ENCODE measurements at regions of chr6 and their contacts with region 1.

Region 1: DNA sequence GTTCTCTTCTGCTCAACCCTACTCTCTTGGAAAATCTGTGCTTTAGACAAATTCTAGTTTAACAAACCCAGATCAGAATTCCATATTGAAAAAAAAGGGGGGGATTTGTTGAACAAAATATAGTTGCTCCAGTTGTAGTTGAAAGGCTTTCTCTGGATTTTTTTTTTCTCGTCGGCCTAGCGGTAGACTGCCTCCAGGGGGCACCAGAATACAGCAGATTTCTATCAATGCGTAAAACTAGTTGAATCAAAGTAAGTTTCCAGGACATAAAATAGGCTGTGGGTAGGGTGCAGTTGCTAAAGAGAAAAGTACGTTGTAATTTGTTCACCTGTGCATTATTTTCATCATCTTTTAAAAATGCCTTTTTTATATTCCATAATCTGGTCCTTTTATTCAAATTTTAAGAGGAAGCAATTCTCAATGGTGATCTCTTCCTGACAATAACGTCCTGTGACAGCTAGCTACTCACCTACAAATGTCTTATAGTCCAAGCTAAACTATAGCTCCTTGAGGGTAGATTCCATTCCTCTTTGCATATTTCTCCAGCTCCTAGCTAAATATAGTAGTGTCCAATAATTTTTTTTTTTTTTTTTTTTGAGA is 105.4 kb downstream of the PERP start:
- DNase-seq: peak; percentile 74
- ATAC-seq: peak; percentile 36
- H3K4me3 Mint-ChIP-seq: no peak overlapping the region
- H3K27ac Mint-ChIP-seq: no peak overlapping the region
- H3K4me1 Mint-ChIP-seq: peaks cover 14% of the 10 kb centered on the region
- H3K27me3 Mint-ChIP-seq: peaks cover 2% of the 10 kb centered on the region

Region 2: GRCh38 chr6:137697267-137697938 is 304.4 kb before region 1 on chr6:
- CTCF ChIA-PET with region 1: interaction called, 37 read pairs
- POLR2A ChIA-PET with region 1: no interaction called
- DNase-seq: no peak
- ATAC-seq: peak; percentile 17
- H3K4me3 Mint-ChIP-seq: no peak overlapping the region
- H3K27ac Mint-ChIP-seq: no peak overlapping the region
- H3K4me1 Mint-ChIP-seq: peaks cover 38% of the 10 kb centered on the region
- H3K27me3 Mint-ChIP-seq: peaks cover 5% of the 10 kb centered on the region

Region 3: DNA sequence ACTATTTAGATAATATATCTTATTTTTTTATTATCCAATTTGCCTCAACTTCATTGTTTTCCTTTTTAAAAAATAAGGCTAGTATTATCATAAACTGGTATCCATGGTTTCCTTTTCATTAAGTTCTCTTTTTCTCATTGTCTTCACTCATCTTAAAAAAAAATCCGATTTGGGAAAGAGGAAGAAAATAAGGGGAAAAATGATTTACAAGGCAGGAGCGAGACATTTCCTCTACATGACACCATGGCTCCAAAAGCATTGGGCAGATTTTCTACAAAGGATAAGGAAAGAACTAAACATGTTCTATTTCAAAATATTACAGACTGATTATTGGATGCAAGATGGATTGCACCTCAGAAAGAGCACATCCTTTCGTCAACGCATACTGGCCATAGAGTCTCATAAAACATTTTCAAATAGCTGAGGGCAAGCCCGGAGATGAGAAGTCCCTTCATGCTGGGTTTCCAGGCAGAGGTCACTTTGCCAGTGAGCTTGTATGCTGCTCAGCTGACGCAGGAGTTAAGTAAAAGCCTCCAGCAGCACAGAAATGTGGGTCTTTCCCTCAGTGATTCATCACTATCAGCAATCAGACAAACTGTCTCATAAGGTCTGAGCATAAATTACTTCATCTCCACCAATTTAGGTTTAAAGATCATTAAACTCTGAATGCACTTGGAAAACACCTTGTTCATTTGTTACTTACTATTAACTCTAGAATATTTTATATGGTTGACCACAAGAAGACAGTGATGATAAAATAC is 263.8 kb before region 1 on chr6:
- CTCF ChIA-PET with region 1: no interaction called
- POLR2A ChIA-PET with region 1: no interaction called
- DNase-seq: no peak
- ATAC-seq: no peak
- H3K4me3 Mint-ChIP-seq: no peak overlapping the region
- H3K27ac Mint-ChIP-seq: no peak overlapping the region
- H3K4me1 Mint-ChIP-seq: peaks cover 17% of the 10 kb centered on the region
- H3K27me3 Mint-ChIP-seq: peaks cover 5% of the 10 kb centered on the region

Region 4: GRCh38 chr6:137975188-137975940 is 26.5 kb before region 1 on chr6:
- CTCF ChIA-PET with region 1: interaction called, 26 read pairs
- POLR2A ChIA-PET with region 1: no interaction called
- DNase-seq: peak; percentile 59
- ATAC-seq: peak; percentile 86
- H3K4me3 Mint-ChIP-seq: peak overlapping the region; percentile 76
- H3K27ac Mint-ChIP-seq: peak overlapping the region; percentile 92
- H3K4me1 Mint-ChIP-seq: peaks cover 51% of the 10 kb centered on the region
- H3K27me3 Mint-ChIP-seq: no peaks in the 10 kb centered on the region

Region 5: DNA sequence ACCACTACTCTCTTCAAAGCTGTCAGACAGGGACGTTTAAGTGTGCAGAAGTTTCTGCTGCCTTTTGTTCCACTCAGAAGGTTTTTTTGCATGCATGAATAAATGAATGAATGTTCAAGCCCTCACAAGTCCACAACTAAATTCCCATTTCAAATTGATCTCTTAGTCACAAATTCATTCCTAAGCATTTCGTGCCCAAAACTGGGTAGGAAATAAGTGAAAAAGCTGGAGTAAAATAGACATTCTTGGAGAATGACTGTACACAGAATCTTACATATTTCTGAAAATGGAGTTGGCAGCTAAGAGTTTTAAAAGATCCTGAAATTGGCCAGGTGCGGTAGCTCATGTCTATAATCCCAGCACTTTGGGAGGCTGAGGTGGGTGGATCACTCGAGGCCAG is 12.2 kb before region 1 on chr6:
- CTCF ChIA-PET with region 1: interaction called, 23 read pairs
- POLR2A ChIA-PET with region 1: no interaction called
- DNase-seq: no peak
- ATAC-seq: no peak
- H3K4me3 Mint-ChIP-seq: no peak overlapping the region
- H3K27ac Mint-ChIP-seq: no peak overlapping the region
- H3K4me1 Mint-ChIP-seq: no peaks in the 10 kb centered on the region
- H3K27me3 Mint-ChIP-seq: peaks cover 19% of the 10 kb centered on the region

Region 6: DNA sequence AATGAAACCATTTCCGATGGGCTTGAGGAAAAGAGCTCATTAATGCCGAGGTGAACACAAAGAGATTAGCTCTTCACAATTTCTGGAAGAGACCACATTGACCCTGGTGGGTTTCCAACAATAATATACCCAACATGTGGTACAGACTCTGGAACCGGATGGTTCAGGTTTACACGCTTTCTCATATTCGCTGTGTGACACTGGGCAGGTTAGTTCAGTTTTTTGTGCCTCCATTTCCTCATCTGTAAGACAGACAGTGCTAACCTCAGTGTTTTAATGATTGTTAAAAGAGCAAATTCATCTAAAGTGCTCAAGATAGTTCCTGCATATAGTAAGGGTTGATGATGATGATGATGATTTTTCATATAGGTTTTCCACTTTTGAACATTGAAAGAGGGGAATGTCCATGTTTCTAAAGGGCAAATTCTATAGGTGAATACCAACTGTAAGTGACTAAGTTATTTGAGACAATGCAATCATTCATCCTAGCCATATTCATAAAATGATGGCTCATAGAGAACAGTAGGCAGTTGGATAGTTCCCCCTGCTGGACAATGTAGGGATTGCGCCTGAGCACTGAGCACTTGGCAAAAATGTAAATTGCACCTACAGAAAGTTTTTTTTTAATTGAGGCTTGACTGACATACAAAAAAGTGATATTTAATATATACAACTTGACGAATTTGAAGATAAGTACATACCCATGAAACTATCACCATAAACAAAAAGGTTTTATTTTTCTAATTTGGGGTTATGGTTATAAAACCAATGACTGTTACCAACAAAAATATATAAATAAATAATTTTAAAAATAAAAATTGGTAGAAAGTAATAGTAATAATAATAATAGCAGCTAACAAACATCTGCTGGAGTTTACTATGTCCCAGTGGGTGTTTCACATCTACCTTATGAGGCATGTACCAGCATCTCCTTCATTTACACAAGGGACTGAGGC is 107.5 kb after region 1 on chr6:
- CTCF ChIA-PET with region 1: interaction called, 92 read pairs
- POLR2A ChIA-PET with region 1: no interaction called
- DNase-seq: peak; percentile 87
- ATAC-seq: no peak
- H3K4me3 Mint-ChIP-seq: no peak overlapping the region
- H3K27ac Mint-ChIP-seq: no peak overlapping the region
- H3K4me1 Mint-ChIP-seq: peaks cover 17% of the 10 kb centered on the region
- H3K27me3 Mint-ChIP-seq: peaks cover 47% of the 10 kb centered on the region